Activated CD4-positive, alpha-beta T cell treated with anti-CD3 and anti-CD28 coated beads for 36 hours (primary cell): ENCODE measurements at regions of chr18 and their contacts with region 1.

Region 1: GRCh38 chr18:3454365-3455089 is 4.6 kb downstream of the TGIF1 start:
- DNase-seq: peak; percentile 40
- ATAC-seq: no peak
- H3K4me3 Mint-ChIP-seq: peak overlapping the region; percentile 94
- H3K27ac Mint-ChIP-seq: peak overlapping the region; percentile 99
- H3K4me1 Mint-ChIP-seq: peaks cover 67% of the 10 kb centered on the region
- H3K27me3 Mint-ChIP-seq: no peaks in the 10 kb centered on the region

Region 2: GRCh38 chr18:3281456-3282400 is 172.8 kb before region 1 on chr18:
- CTCF ChIA-PET with region 1: interaction called, 4 read pairs
- POLR2A ChIA-PET with region 1: no interaction called
- intact Hi-C with region 1: loop called (anchors 1 to 5 kb)
- DNase-seq: no peak
- ATAC-seq: peak; percentile 90
- H3K4me3 Mint-ChIP-seq: no peak overlapping the region
- H3K27ac Mint-ChIP-seq: no peak overlapping the region
- H3K4me1 Mint-ChIP-seq: peaks cover 10% of the 10 kb centered on the region
- H3K27me3 Mint-ChIP-seq: no peaks in the 10 kb centered on the region

Region 3: GRCh38 chr18:3380384-3380961 is 74.1 kb before region 1 on chr18:
- CTCF ChIA-PET with region 1: interaction called, 6 read pairs
- POLR2A ChIA-PET with region 1: interaction called, 4 read pairs
- intact Hi-C with region 1: loop called (anchors 1 to 2 kb)
- DNase-seq: peak; percentile 49
- ATAC-seq: peak; percentile 97
- H3K4me3 Mint-ChIP-seq: no peak overlapping the region
- H3K27ac Mint-ChIP-seq: no peak overlapping the region
- H3K4me1 Mint-ChIP-seq: peaks cover 10% of the 10 kb centered on the region
- H3K27me3 Mint-ChIP-seq: peaks cover 10% of the 10 kb centered on the region

Region 4: DNA sequence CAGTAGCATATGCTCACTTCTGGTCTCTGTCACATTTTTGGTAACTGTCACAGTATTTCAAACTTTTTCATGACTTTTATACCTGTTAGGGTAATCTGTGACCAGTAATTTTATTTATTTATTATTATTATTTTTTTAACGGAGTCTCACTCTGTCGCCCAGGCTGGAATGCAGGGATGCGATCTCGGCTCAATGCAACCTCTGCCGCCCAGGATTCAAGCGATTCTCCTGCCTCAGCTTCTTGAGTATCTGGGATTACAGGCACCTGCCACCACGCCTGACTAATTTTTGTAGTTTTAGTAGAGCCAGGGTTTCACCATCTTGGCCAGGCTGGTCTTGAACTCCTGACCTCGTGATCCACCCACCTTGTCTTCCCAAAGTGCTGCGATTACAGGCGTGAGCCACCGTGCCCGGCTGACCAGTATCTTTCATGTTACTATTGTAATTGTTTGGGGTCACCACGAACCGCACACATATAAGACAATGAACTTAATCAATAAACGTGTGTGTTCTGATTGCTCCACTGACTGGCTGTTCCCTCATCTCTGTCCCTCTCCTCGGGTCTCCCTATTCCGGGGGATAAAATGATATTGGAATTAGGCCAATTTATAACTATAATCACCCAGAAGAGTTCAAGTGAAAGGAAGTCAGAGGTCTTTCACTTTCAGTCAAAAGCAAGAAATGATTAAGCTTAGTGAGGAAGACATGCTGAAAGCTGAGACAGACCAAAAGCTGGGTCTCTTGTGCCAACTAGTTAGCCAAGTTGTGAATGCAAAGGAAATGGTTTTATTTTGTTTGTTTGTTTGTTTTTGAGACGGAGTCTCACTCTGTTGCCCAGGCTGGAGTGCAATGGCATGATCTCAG is 18.4 kb after region 1 on chr18:
- CTCF ChIA-PET with region 1: interaction called, 11 read pairs
- POLR2A ChIA-PET with region 1: interaction called, 3 read pairs
- intact Hi-C with region 1: loop called (anchors 1 to 2 kb)
- DNase-seq: peak; percentile 23
- ATAC-seq: peak; percentile 89
- H3K4me3 Mint-ChIP-seq: no peak overlapping the region
- H3K27ac Mint-ChIP-seq: no peak overlapping the region
- H3K4me1 Mint-ChIP-seq: peaks cover 12% of the 10 kb centered on the region
- H3K27me3 Mint-ChIP-seq: peaks cover 2% of the 10 kb centered on the region

Region 5: DNA sequence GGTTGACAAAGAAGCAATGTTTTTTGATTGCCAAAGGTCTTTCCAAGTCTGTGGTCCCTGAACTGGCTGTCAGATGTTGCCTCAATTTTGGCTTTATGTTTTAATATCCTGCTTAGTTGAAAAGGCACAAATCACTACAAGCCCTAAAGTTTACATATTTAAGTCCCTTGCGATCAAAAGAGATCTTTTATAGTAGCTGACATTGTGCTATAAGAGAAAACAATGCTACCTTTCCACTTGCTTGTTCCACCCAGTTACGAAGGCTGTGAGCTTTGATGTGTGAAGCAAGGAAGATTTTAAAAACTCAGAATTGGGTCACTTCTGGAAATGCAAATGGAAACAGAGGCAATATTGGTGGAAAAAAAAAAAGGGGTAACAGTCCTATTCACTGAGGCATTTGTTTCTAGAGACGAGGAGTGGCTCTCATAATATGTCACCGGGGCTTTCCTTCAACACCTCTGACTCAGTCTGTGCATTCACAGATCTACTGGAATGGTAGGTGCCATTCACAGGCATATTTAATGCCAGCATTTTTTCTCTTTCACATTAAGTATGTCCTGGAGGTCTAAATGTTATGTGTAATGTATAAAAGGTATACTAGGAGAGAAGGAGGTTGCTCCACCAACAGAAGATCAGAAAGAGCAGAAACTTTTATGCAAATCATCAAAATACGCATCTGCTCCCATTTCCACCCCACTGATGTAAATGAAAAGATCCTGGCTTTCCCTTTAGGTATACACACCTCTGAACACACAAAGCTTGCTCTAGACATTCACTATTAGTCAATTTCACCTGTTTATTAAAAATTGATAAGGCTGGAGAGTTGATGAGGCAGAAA is 87.2 kb after region 1 on chr18:
- CTCF ChIA-PET with region 1: interaction called, 4 read pairs
- POLR2A ChIA-PET with region 1: no interaction called
- intact Hi-C with region 1: loop called (anchors 2 to 5 kb)
- DNase-seq: peak; percentile 65
- ATAC-seq: peak; percentile 96
- H3K4me3 Mint-ChIP-seq: peak overlapping the region; percentile 16
- H3K27ac Mint-ChIP-seq: peak overlapping the region; percentile 74
- H3K4me1 Mint-ChIP-seq: peaks cover 32% of the 10 kb centered on the region
- H3K27me3 Mint-ChIP-seq: peaks cover 2% of the 10 kb centered on the region

Region 6: DNA sequence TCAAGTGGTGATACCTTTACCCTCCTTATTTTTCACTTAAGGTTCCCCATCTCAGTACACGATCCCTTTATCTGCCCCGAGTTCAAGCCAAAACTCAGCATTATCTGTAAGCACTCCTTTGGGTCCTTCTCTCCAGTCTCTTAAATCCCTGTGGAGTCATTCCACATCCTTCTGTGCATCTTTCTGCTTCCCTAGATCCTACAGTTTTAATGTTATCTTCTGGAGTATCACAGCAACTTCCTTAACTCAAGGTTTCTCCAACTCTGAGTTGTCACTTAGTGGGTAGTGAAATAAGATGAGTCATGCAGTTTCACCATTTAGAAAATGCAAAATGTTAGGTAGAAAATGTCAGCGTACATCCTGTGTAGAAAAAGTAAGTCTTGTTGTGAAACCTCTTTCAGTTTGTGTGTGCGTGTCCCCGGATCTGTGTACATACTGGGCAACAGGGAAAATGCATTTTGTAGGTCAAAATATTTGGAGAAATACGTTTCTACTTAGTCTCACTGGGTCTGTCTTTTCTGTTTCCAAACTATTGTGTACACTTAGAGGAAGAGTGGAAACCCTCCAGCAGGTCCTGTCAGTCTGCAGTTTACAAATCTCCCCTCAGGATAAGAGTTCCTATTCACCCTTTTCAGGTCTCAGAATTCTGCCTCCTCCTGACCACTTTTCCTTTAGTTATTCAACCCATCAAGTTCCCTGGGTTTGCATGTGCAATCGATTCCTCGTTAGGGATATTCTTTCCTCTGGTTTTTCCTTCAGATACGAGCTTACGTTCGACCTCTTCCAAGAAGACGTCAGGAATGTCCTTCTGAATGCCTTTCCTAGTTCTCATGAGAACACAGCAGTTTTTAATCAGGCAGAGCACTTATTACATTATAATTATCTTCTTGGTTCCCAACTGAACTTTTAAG is 150.2 kb after region 1 on chr18:
- CTCF ChIA-PET with region 1: interaction called, 18 read pairs
- POLR2A ChIA-PET with region 1: interaction called, 9 read pairs
- intact Hi-C with region 1: no loop called
- DNase-seq: peak; percentile 59
- ATAC-seq: peak; percentile 69
- H3K4me3 Mint-ChIP-seq: no peak overlapping the region
- H3K27ac Mint-ChIP-seq: no peak overlapping the region
- H3K4me1 Mint-ChIP-seq: peaks cover 11% of the 10 kb centered on the region
- H3K27me3 Mint-ChIP-seq: no peaks in the 10 kb centered on the region